PC-3 (cell line): ENCODE measurements at regions of chr12 and their contacts with region 1.

Region 1: GRCh38 chr12:17278946-17279345 is 673.0 kb upstream of the LMO3 start:
- DNase-seq: peak; percentile 39
- ATAC-seq: no peak
- H3K4me3 ChIP-seq: no peak overlapping the region
- H3K27ac ChIP-seq: no peak overlapping the region
- H3K4me1 ChIP-seq: no peaks in the 10 kb centered on the region
- H3K27me3 ChIP-seq: no peaks in the 10 kb centered on the region
- CTCF ChIP-seq: peak; percentile 61; the same call in 1 of the 2 replicates

Region 2: DNA sequence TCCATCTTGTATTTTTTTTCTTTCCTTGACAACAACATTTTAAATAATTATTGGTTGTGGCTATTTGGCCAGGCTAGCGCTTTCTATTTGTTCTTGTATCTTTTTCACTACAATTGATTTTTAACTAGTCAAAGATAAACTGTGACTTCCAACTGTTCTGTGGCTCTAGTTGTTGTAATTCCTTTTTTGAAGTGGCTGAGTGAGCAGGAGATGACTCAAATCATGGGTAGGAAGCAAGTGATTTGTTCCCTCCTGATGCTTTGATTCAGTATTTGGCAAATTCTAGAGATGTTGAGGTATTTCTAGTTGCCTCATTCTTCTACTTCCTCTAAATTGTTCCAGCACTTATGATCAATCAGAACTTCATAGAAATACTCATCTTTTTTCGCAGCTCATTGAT is 177.5 kb after region 1 on chr12:
- CTCF ChIA-PET with region 1: no interaction called
- POLR2A ChIA-PET with region 1: no interaction called
- intact Hi-C with region 1: loop called (anchors 10 kb)
- DNase-seq: peak; percentile 21
- ATAC-seq: no peak
- H3K4me3 ChIP-seq: no peak overlapping the region
- H3K27ac ChIP-seq: no peak overlapping the region
- H3K4me1 ChIP-seq: peaks cover 11% of the 10 kb centered on the region; the same call in 1 of the 2 replicates
- H3K27me3 ChIP-seq: no peaks in the 10 kb centered on the region
- CTCF ChIP-seq: no peak

Region 3: GRCh38 chr12:17539196-17539595 is 260.2 kb after region 1 on chr12:
- CTCF ChIA-PET with region 1: no interaction called
- POLR2A ChIA-PET with region 1: no interaction called
- intact Hi-C with region 1: no loop called
- DNase-seq: peak; percentile 51
- ATAC-seq: peak; percentile 33
- H3K4me3 ChIP-seq: no peak overlapping the region
- H3K27ac ChIP-seq: no peak overlapping the region
- H3K4me1 ChIP-seq: no peaks in the 10 kb centered on the region
- H3K27me3 ChIP-seq: no peaks in the 10 kb centered on the region
- CTCF ChIP-seq: no peak